ENCODE measurements at regions of chr15 and their contacts with region 1.

Region 1: DNA sequence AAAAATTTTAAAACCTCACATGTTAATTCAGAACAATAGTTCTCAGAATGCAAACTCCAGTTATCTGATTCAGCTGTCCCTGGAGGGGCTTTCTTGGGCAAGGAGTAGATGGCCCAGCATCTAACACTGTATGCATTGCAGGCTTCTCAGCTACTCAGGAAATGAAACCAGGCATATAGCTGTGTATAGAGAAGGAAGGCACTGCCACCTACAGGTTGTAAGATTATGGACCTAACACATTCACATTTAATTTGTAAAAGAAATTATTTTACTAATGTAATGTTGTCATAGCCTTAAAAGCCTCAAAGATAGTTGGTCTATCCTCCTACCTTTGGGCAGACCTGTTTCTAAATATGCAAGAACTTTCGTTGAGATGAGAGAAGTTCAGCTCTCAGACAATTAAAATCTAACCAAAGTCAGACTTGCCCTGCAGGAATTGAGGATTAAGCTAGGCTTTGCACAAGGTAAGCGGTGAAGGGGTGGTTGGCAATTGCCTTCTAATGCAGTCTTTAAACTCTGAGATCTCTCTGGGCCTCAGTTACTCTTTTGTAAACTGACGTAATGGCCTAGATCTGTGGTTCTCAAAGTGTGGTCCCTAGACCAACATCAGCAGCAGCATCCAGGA is 132.8 kb upstream of the SLC24A5 start:
- DNase-seq: peak; percentile 61 to 82 (median 79)
- H3K4me3 ChIP-seq: no peak overlapping the region
- H3K27ac ChIP-seq: no peak overlapping the region
- H3K4me1 ChIP-seq: peaks cover 0 to 4% (median 0%) of the 10 kb centered on the region in 4 experiments
- H3K27me3 ChIP-seq: no peaks in the 10 kb centered on the region

Region 2: GRCh38 chr15:47196057-47196456 is 792.0 kb before region 1 on chr15:
- CTCF ChIA-PET with region 1: interaction called, 43 read pairs
- POLR2A ChIA-PET with region 1: no interaction called
- DNase-seq: peak; percentile 75 to 87 (median 85)
- H3K4me3 ChIP-seq: no peak overlapping the region
- H3K27ac ChIP-seq: no peak overlapping the region
- H3K4me1 ChIP-seq: no peaks in the 10 kb centered on the region
- H3K27me3 ChIP-seq: peaks cover 0 to 6% (median 2%) of the 10 kb centered on the region in 5 experiments

Region 3: GRCh38 chr15:47473832-47474231 is 514.2 kb before region 1 on chr15:
- CTCF ChIA-PET with region 1: interaction called, 17 read pairs
- POLR2A ChIA-PET with region 1: no interaction called
- DNase-seq: no peak
- H3K4me3 ChIP-seq: no peak overlapping the region
- H3K27ac ChIP-seq: no peak overlapping the region
- H3K4me1 ChIP-seq: no peaks in the 10 kb centered on the region
- H3K27me3 ChIP-seq: no peaks in the 10 kb centered on the region

Region 4: DNA sequence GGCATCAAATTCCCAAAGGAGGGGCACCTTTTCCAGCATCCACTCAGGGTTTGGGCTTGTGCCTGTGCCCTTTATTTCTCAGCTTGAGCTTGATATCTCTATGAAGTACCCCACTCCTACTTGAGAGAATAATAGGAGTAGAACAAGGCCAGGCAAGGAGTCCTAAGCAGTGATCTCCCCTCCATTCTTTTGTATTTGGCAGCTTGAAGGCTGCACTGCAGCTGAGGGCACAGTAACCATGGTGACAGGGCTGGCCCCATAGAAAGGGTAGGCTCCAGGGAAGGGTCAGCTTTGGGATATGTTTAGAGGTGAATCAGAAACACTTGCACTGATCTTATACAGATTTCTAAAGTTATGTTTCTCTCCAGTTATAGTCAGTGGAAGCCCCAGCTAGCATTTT is 12.6 kb before region 1 on chr15:
- CTCF ChIA-PET with region 1: interaction called, 22 read pairs
- POLR2A ChIA-PET with region 1: no interaction called
- DNase-seq: no peak
- H3K4me3 ChIP-seq: no peak overlapping the region
- H3K27ac ChIP-seq: no peak overlapping the region
- H3K4me1 ChIP-seq: no peaks in the 10 kb centered on the region
- H3K27me3 ChIP-seq: no peaks in the 10 kb centered on the region